ENCODE measurements at regions of chr4 and their contacts with region 1.

Region 1: GRCh38 chr4:78775303-78776030 is 683 bp upstream of the BMP2K start:
- DNase-seq: peak; percentile 60 to 95
- H3K4me3 ChIP-seq: peak overlapping the region; percentile 73 to 97
- H3K27ac ChIP-seq: peak overlapping the region; percentile 93 to 99
- H3K4me1 ChIP-seq: peaks cover 4 to 5% of the 10 kb centered on the region in 2 donors
- H3K27me3 ChIP-seq: no peaks in the 10 kb centered on the region
- CTCF ChIP-seq: no peak

Region 2: GRCh38 chr4:78638337-78639172 is 136.9 kb before region 1 on chr4:
- intact Hi-C with region 1: loop called (anchors 5 kb)
- DNase-seq: no peak
- H3K4me3 ChIP-seq: no peak overlapping the region
- H3K27ac ChIP-seq: no peak overlapping the region
- H3K4me1 ChIP-seq: peaks cover 0 to 1% of the 10 kb centered on the region in 2 donors
- H3K27me3 ChIP-seq: no peaks in the 10 kb centered on the region
- CTCF ChIP-seq: no peak

Region 3: GRCh38 chr4:78644744-78645330 is 130.6 kb before region 1 on chr4:
- intact Hi-C with region 1: loop called (anchors 2 kb)
- DNase-seq: peak in 1 of 2 donors; percentile 82
- H3K4me3 ChIP-seq: no peak overlapping the region
- H3K27ac ChIP-seq: peak overlapping the region; percentile 57 to 76
- H3K4me1 ChIP-seq: peaks cover 0 to 16% of the 10 kb centered on the region in 2 donors
- H3K27me3 ChIP-seq: no peaks in the 10 kb centered on the region
- CTCF ChIP-seq: peak; percentile 78 to 88 (median 87)